ENCODE measurements at regions of chr3 and their contacts with region 1.

Region 1: DNA sequence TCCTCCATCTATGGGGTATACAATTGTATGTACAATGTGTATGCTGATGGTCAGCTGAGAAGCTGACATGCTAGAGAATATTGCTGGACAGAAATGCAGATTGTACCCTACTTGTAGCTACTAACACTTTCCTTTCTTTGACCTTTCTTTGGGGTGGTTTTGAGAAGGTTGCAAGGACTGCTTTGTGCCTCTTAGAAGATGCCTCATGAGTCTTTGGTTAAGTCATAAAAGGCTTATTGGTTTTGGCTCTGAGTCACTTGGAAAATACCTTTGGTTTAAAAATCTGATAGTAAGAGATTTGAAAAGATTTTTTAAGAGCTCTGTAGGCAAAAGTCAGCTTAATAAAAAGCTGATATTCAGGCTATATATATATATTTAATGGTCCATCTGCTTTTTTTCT is 71.5 kb downstream of the ZMAT3 start:
- DNase-seq: no peak

Region 2: DNA sequence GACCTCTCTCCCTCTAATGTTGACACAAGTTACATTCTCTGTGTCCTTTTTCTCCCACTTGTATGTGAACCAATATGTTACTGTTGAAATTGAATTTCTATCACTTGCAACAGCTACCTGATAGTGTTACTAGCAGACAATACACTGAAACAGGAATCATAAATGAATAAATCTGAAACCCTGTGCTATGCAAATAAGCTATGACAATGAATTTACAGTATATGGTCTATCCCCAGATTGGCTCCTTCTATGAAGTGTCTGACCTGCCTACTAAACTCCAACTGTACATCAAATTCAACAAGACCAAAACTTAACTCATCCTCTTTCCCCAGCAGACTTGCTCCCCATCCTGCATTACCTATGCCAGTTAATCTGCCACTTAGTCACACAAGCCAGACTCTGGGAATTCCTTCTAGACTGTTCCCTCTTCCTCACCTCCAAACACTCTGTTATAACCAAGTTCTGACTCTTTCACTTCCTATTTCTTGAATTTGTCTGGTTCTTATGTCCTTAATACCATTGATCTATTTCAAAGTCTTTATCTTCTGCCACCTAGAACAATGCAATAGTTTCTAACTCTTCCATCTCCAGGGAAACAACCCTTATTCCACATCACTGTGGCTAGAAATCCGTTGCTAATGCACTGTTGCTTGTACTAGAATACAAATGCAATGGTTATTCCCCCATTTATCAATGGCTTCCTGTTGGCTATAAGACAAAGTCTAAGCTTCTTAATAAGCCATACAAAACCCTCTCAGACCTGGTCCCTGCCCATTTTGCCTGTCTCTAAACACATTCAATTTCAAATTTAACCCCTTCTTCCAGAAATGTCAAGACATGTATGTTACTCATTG is 309.3 kb after region 1 on chr3:
- intact Hi-C with region 1: loop called in 1 of 2 experiments (anchors 10 kb)
- DNase-seq: no peak

Measured in posterior vena cava (tissue), 2 donors.